H1 (cell line): ENCODE measurements at regions of chr20 and their contacts with region 1.

Region 1: GRCh38 chr20:18712882-18713281 is 100.7 kb upstream of the SCP2D1 start:
- DNase-seq: peak in 1 of 2 experiments; percentile 68
- H3K4me3 ChIP-seq: no peak overlapping the region
- H3K27ac ChIP-seq: no peak overlapping the region
- H3K4me1 ChIP-seq: peaks cover 2 to 5% (median 5%) of the 10 kb centered on the region in 4 experiments; a peak in 3 of 7 replicates
- H3K27me3 ChIP-seq: no peaks in the 10 kb centered on the region; a peak in 1 of 7 replicates
- CTCF ChIP-seq: peak; percentile 59 to 68 (median 59)
- EP300 ChIP-seq: no peak
- POLR2A ChIP-seq: no peak
- RAD21 ChIP-seq: peak; percentile 81 to 83

Region 2: DNA sequence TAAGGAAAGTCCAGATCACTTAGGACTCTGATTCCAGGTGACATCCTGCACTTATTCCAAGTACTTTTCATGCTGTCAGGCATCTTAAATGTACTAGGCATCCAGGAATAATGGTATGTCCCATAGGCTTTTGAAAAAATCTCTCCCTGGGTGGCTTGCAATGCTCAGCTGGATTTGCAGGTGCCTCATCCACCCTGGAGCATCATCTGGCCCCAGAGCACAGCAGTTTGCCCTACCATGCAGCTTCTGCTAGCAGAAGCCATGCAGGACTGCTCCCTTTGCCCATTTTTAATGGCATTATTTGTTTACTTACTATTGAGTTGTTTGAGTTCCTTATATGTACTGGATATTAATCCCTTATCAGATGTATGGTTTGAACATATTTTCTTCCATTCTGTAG is 291.3 kb before region 1 on chr20:
- CTCF ChIA-PET with region 1: no interaction called
- POLR2A ChIA-PET with region 1: no interaction called
- DNase-seq: no peak
- H3K4me3 ChIP-seq: no peak overlapping the region
- H3K27ac ChIP-seq: no peak overlapping the region
- H3K4me1 ChIP-seq: peaks cover 0 to 6% (median 0%) of the 10 kb centered on the region in 4 experiments; a peak in 1 of 7 replicates
- H3K27me3 ChIP-seq: no peaks in the 10 kb centered on the region
- CTCF ChIP-seq: no peak
- EP300 ChIP-seq: no peak
- POLR2A ChIP-seq: no peak
- RAD21 ChIP-seq: no peak

Region 3: GRCh38 chr20:18724788-18725464 is 12.0 kb after region 1 on chr20:
- CTCF ChIA-PET with region 1: interaction called, 10 read pairs
- POLR2A ChIA-PET with region 1: interaction called, 3 read pairs
- DNase-seq: no peak
- H3K4me3 ChIP-seq: no peak overlapping the region
- H3K27ac ChIP-seq: no peak overlapping the region
- H3K4me1 ChIP-seq: peaks cover 0 to 5% (median 1%) of the 10 kb centered on the region in 4 experiments; a peak in 3 of 7 replicates
- H3K27me3 ChIP-seq: no peaks in the 10 kb centered on the region
- CTCF ChIP-seq: no peak
- EP300 ChIP-seq: no peak
- POLR2A ChIP-seq: no peak
- RAD21 ChIP-seq: no peak